Natural killer cell (primary cell): ENCODE measurements at regions of chr20 and their contacts with region 1.

Region 1: DNA sequence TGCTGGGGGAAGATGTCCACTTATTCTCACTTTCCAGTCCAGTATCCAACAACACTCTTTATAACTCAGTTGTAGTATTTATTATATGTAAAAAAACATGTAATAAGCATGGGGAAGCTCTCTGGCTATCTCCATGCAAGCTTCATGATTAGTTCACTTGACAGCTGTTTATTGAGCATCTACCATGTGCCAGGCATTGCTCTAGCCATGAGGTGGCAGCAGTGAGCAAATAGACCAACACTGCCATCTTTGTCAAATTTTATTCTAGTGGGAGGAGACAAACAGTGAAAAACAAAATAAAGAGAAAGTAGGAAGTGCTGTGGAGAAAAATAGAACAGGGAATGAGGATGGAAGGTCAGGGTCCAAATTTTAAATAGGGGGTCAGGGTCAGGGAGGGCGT is 131.8 kb downstream of the CFAP61 start:
- DNase-seq: peak in 1 of 2 donors; percentile 13
- ATAC-seq: no peak
- H3K4me3 ChIP-seq: no peak overlapping the region
- H3K4me3 Mint-ChIP-seq: peak overlapping the region; percentile 11
- H3K27ac ChIP-seq: no peak overlapping the region
- H3K27ac Mint-ChIP-seq: peak overlapping the region; percentile 70 to 94
- H3K4me1 ChIP-seq: peaks cover 24% of the 10 kb centered on the region
- H3K4me1 Mint-ChIP-seq: peaks cover 71 to 75% of the 10 kb centered on the region in 2 donors
- H3K27me3 ChIP-seq: no peaks in the 10 kb centered on the region
- H3K27me3 Mint-ChIP-seq: no peaks in the 10 kb centered on the region
- CTCF ChIP-seq: peak; percentile 19

Region 2: GRCh38 chr20:20138301-20139064 is 45.7 kb before region 1 on chr20:
- intact Hi-C with region 1: loop called (anchors 5 kb)
- DNase-seq: no peak
- ATAC-seq: no peak
- H3K4me3 ChIP-seq: no peak overlapping the region
- H3K4me3 Mint-ChIP-seq: no peak overlapping the region
- H3K27ac ChIP-seq: no peak overlapping the region
- H3K27ac Mint-ChIP-seq: no peak overlapping the region
- H3K4me1 ChIP-seq: peaks cover 4% of the 10 kb centered on the region
- H3K4me1 Mint-ChIP-seq: peaks cover 0 to 5% of the 10 kb centered on the region in 2 donors
- H3K27me3 ChIP-seq: no peaks in the 10 kb centered on the region
- H3K27me3 Mint-ChIP-seq: no peaks in the 10 kb centered on the region
- CTCF ChIP-seq: no peak

Region 3: DNA sequence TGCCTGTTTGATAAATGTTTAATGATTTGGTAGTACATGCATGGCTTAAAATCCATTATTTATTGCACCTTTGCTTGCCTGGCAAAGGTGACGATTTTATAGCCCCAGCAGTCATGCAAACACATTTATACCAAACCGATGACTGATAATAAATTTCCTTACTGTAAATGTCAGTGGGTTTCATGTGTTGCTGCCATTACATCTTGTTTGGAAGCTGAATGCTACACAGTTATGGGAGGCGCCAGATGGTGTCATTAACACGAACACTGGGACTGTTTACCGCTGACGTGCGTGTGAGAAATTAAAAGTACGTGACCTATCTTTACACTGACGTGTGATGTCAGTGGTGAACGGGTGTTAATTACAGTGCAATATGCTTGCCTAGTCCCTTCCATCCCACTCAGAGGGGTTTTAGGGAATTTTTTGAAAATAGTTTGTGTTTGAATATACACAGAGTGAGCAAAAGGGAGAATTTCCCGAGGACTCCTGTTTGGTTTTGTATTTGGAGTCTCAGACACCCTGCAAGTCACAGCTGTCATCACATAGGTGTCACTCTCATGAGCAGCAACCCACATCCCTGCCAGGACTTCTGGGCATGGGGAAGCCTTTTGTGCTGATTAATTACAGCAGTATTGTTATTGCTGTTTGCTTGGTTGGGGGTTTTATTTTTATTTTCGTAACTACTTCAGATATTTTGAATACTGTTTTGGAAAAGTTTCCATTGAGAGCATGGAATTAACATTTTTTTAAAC is 32.0 kb after region 1 on chr20:
- intact Hi-C with region 1: loop called (anchors 1 kb)
- DNase-seq: peak; percentile 66 to 68
- ATAC-seq: peak; percentile 84 to 94 (median 89)
- H3K4me3 ChIP-seq: no peak overlapping the region
- H3K4me3 Mint-ChIP-seq: peak overlapping the region; percentile 76
- H3K27ac ChIP-seq: peak overlapping the region; percentile 75
- H3K27ac Mint-ChIP-seq: peak overlapping the region; percentile 91 to 96
- H3K4me1 ChIP-seq: no peaks in the 10 kb centered on the region
- H3K4me1 Mint-ChIP-seq: peaks cover 47 to 50% of the 10 kb centered on the region in 2 donors
- H3K27me3 ChIP-seq: no peaks in the 10 kb centered on the region
- H3K27me3 Mint-ChIP-seq: no peaks in the 10 kb centered on the region
- CTCF ChIP-seq: no peak